Psoas muscle (tissue), 8 donors: ENCODE measurements at regions of chr1 and their contacts with region 1.

Region 1: DNA sequence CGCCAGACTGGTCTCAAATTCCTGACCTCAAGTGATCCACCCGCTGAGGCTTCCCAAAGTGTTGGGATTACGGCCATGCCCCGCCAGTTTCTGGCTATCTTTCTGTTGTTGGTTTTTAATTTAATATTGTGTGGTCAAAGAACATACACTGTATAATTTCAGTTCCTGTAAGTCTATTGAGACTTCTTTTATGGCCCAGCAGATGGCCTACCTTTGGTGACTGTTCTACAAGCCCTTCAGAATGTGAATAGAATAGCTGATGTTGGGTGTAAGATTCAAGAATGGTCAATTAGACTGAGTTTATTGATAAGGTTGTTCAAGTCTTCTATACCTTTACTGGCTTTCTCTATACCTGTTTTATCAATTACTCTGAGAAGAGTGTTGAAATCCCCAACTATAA is 10.7 kb downstream of the HES2 start:
- DNase-seq: no peak
- ATAC-seq: no peak
- H3K4me3 ChIP-seq: no peak overlapping the region
- H3K27ac ChIP-seq: no peak overlapping the region
- H3K4me1 ChIP-seq: no peaks in the 10 kb centered on the region
- H3K27me3 ChIP-seq: peaks cover 0 to 20% (median 1%) of the 10 kb centered on the region in 3 donors
- CTCF ChIP-seq: no peak

Region 2: GRCh38 chr1:6343506-6344405 is 65.3 kb before region 1 on chr1:
- intact Hi-C with region 1: loop called in 1 of 2 experiments (anchors 5 kb)
- DNase-seq: peak; percentile 69 to 80
- ATAC-seq: peak; percentile 83 to 90 (median 88)
- H3K4me3 ChIP-seq: no peak overlapping the region
- H3K27ac ChIP-seq: no peak overlapping the region
- H3K4me1 ChIP-seq: no peaks in the 10 kb centered on the region
- H3K27me3 ChIP-seq: no peaks in the 10 kb centered on the region
- CTCF ChIP-seq: peak; percentile 90